ENCODE measurements at regions of chr5 and their contacts with region 1.

Region 1: DNA sequence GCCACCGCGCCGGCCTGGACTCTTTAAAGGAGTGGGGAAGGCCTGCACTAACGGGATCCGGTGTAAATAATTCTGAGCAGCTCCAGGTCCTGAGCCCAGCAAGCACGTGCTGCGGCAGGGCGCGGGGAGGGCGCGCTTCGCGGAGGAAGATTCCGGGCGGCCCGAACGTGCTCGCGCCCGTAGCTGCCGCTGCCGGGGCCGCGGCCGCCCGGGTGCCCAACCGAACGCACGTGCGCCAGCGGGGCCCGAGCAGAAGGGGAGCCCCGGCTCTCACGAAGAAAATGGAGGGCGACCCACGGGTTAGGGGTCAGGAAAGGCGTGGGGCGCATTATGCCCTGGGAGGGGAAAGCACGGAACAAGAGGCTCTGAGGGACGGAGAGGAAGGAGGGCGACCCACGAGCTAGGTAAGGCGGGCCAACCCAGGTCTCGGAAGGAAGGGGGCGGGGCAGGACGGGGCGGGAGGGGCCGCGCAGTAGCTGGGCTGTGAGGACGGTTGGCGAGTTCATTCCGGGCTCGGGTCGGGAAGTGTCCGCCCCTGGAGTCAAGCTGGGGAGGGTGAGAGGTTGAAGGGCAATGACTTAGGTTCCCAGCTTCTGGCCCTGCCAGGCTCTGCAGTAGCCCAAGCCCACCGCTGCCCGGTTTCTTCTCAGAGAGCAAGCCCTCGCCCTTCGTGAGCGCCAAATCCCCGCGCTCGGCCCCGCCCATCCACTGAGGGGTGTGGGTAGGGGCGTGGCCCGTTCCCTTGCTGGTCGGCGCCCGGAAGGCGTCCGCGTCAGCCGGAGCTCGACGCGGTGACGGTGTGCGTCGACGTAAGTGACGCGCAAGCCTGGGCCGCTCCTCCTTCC is at the start of gene ZNF131:
- DNase-seq: peak; percentile 96 to 100 (median 96)
- ATAC-seq: peak; percentile 93
- H3K4me3 ChIP-seq: peak within 1 kb of the TSS; percentile 88
- H3K27ac ChIP-seq: peak within 1 kb of the TSS; percentile 97
- H3K4me1 ChIP-seq: peaks cover 14 to 20% of the 10 kb centered on the region in 2 experiments
- H3K27me3 ChIP-seq: no peaks in the 10 kb centered on the region
- CTCF ChIP-seq: 0 out of 6 replicates have a peak, but pooled peaks of 1 of the 3 experiments have one; percentile 2
- EP300 ChIP-seq: peak; percentile 2; the same call in 1 of the 2 replicates
- POLR2A ChIP-seq: peak; percentile 92
- RAD21 ChIP-seq: no peak
- polyA plus RNA-seq, gene ZNF131: 28.5 to 31.7 TPM

Region 2: GRCh38 chr5:42927730-42928129 is 193.2 kb before region 1 on chr5:
- CTCF ChIA-PET with region 1: no interaction called
- POLR2A ChIA-PET with region 1: no interaction called
- in situ Hi-C with region 1: no loop called
- intact Hi-C with region 1: no loop called
- DNase-seq: no peak
- ATAC-seq: no peak
- H3K4me3 ChIP-seq: no peak overlapping the region
- H3K27ac ChIP-seq: no peak overlapping the region
- H3K4me1 ChIP-seq: peaks cover 0 to 9% of the 10 kb centered on the region in 2 experiments; a peak in 1 of 5 replicates
- H3K27me3 ChIP-seq: 0 out of 5 replicates have a peak, but pooled peaks cover 0 to 9% of the 10 kb centered on the region in 2 experiments
- CTCF ChIP-seq: no peak
- EP300 ChIP-seq: no peak
- POLR2A ChIP-seq: no peak
- RAD21 ChIP-seq: no peak

Region 3: GRCh38 chr5:43008369-43009153 is 112.4 kb before region 1 on chr5:
- CTCF ChIA-PET with region 1: interaction called, 3 read pairs
- POLR2A ChIA-PET with region 1: interaction called, 7 read pairs
- in situ Hi-C with region 1: no loop called
- intact Hi-C with region 1: loop called (anchors 5 kb)
- DNase-seq: peak; percentile 72 to 98 (median 80)
- ATAC-seq: peak; percentile 85
- H3K4me3 ChIP-seq: peak overlapping the region; percentile 46
- H3K27ac ChIP-seq: peak overlapping the region; percentile 93
- H3K4me1 ChIP-seq: peaks cover 16 to 21% of the 10 kb centered on the region in 2 experiments; a peak in 4 of 5 replicates
- H3K27me3 ChIP-seq: no peaks in the 10 kb centered on the region
- CTCF ChIP-seq: peak; percentile 53 to 62 (median 59)
- EP300 ChIP-seq: peak; percentile 99
- POLR2A ChIP-seq: peak; percentile 76
- RAD21 ChIP-seq: peak; percentile 22 to 54; a peak in 3 of 4 replicates

Region 4: GRCh38 chr5:43105369-43106289 is 15.3 kb before region 1 on chr5:
- CTCF ChIA-PET with region 1: interaction called, 3 read pairs
- POLR2A ChIA-PET with region 1: interaction called, 18 read pairs
- in situ Hi-C with region 1: no loop called
- intact Hi-C with region 1: no loop called
- DNase-seq: peak; percentile 90 to 99 (median 92)
- ATAC-seq: peak; percentile 96
- H3K4me3 ChIP-seq: peak overlapping the region; percentile 35
- H3K27ac ChIP-seq: peak overlapping the region; percentile 79
- H3K4me1 ChIP-seq: peaks cover 0 to 7% of the 10 kb centered on the region in 2 experiments; a peak in 2 of 5 replicates
- H3K27me3 ChIP-seq: no peaks in the 10 kb centered on the region
- CTCF ChIP-seq: peak; percentile 100
- EP300 ChIP-seq: no peak
- POLR2A ChIP-seq: no peak
- RAD21 ChIP-seq: peak; percentile 99

Region 5: GRCh38 chr5:43140286-43140685 is 19.3 kb after region 1 on chr5:
- CTCF ChIA-PET with region 1: no interaction called
- POLR2A ChIA-PET with region 1: interaction called, 22 read pairs
- in situ Hi-C with region 1: no loop called
- intact Hi-C with region 1: no loop called
- DNase-seq: no peak
- ATAC-seq: no peak
- H3K4me3 ChIP-seq: no peak overlapping the region
- H3K27ac ChIP-seq: no peak overlapping the region
- H3K4me1 ChIP-seq: no peaks in the 10 kb centered on the region
- H3K27me3 ChIP-seq: no peaks in the 10 kb centered on the region
- CTCF ChIP-seq: no peak
- EP300 ChIP-seq: no peak
- POLR2A ChIP-seq: no peak
- RAD21 ChIP-seq: no peak

Region 6: DNA sequence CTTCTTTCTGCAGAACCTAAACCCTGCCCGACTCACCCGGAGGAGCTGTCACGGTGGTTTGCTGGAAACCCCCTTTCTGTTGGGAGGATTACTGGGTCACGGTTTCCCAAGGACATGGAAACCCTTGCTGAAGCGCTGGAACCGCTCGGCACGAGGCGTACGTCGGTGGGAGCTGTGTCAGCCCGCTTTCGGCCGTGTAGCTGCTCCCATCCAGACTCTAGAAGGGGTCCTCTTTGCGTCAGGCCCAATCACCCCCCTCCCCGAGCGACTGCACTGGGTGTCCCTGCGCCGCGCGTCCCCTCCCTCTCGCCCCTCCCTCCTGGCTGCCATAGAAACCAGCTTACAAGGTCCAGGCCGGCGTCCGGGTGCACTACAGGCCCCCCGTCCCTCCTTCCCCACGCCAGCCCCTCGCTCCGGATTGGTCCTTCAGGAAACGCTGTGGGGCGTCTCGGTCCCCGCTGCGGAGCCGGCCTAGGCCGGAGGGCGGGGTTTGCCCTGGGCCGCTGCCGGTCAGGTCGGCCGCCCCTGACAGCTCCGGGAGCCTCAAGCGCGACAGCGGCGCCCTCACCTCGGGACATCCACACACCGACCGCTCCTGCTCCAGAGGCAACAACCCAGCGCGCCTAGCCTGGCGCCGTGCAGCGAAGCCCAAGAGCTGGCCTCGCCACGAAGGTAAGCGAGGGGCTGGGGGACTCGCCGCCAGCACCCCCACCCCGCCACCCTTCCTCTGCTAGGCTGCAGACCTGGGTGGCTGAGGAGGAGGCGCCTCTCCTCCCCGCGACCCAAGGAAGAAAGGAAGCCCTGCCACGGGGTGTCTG is 71.0 kb after region 1 on chr5 and contains the start of gene NIM1K:
- CTCF ChIA-PET with region 1: no interaction called
- POLR2A ChIA-PET with region 1: no interaction called
- in situ Hi-C with region 1: no loop called
- intact Hi-C with region 1: no loop called
- DNase-seq: no peak
- ATAC-seq: no peak
- H3K4me3 ChIP-seq: no peak within 1 kb of the TSS
- H3K27ac ChIP-seq: no peak within 1 kb of the TSS
- H3K4me1 ChIP-seq: peaks cover 5 to 10% of the 10 kb centered on the region in 2 experiments; a peak in 2 of 5 replicates
- H3K27me3 ChIP-seq: no peaks in the 10 kb centered on the region
- CTCF ChIP-seq: no peak
- EP300 ChIP-seq: no peak
- POLR2A ChIP-seq: no peak
- RAD21 ChIP-seq: no peak
- polyA plus RNA-seq, gene NIM1K: 0.03 TPM in 1 of 2 experiments, not detected in the other

Region 7: GRCh38 chr5:43305948-43306565 is 185.1 kb after region 1 on chr5:
- CTCF ChIA-PET with region 1: no interaction called
- POLR2A ChIA-PET with region 1: no interaction called
- in situ Hi-C with region 1: no loop called
- intact Hi-C with region 1: loop called (anchors 5 kb)
- DNase-seq: peak; percentile 41 to 85 (median 44)
- ATAC-seq: peak; percentile 78
- H3K4me3 ChIP-seq: no peak overlapping the region
- H3K27ac ChIP-seq: no peak overlapping the region
- H3K4me1 ChIP-seq: peaks cover 11 to 57% of the 10 kb centered on the region in 2 experiments
- H3K27me3 ChIP-seq: no peaks in the 10 kb centered on the region
- CTCF ChIP-seq: peak; percentile 62 to 83 (median 72); a peak in 5 of 6 replicates
- EP300 ChIP-seq: no peak
- POLR2A ChIP-seq: no peak
- RAD21 ChIP-seq: peak; percentile 83 to 85

Measured in K562 (cell line).